Activated CD4-positive, alpha-beta T cell treated with anti-CD3 and anti-CD28 coated beads for 36 hours (primary cell): ENCODE measurements at regions of chr6 and their contacts with region 1.

Region 1: DNA sequence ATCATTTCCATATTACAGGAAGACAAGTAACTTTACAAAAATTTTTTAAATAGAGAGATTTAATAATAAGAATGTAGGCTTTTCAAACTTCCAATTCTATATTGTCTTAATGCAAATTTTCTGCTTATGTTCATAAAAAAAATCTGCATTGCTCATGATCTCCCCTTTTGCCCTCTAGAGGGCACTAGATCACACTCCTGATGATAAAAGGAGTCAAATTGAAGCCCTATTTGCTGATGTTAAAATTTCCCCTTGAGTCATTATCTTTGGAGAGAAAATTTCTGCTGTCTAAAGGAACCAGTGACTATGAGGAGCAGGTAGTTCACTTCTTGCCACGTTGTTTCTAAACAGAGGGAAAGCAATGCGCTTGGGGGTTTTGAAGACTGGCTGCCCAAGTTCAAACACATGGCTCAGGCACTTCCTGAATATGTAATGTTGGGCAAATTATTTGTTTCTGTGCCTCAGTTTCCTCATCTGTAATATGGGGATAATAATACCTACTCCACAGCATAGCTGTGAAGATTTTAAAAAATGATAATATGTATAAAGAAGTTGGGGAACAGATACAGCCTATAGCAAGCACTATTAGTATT is 874.2 kb downstream of the TFAP2A start:
- DNase-seq: peak; percentile 8
- ATAC-seq: peak; percentile 51
- H3K4me3 Mint-ChIP-seq: no peak overlapping the region
- H3K27ac Mint-ChIP-seq: no peak overlapping the region
- H3K4me1 Mint-ChIP-seq: no peaks in the 10 kb centered on the region
- H3K27me3 Mint-ChIP-seq: peaks cover 2% of the 10 kb centered on the region

Region 2: DNA sequence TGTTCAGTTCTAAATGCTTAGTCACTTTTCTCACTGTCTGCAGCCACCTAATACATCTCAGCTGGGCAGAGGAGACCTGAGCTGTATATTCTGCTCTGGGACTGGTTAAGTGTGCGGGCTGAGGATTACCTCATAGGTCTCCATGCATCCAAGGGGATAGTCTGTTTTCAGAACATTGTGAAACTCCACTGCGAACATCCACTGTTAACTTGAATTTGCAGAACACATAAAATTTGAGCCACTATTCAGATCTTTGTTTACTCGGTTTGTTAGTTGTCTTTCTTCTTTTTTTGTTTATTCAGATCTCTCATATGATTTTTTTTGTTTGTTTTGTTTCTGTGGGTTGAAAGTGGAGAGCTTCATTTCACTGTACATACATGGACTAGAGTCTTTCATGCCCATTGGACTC is 72.8 kb before region 1 on chr6:
- CTCF ChIA-PET with region 1: no interaction called
- POLR2A ChIA-PET with region 1: no interaction called
- intact Hi-C with region 1: no loop called
- DNase-seq: no peak
- ATAC-seq: no peak
- H3K4me3 Mint-ChIP-seq: no peak overlapping the region
- H3K27ac Mint-ChIP-seq: no peak overlapping the region
- H3K4me1 Mint-ChIP-seq: no peaks in the 10 kb centered on the region
- H3K27me3 Mint-ChIP-seq: peaks cover 2% of the 10 kb centered on the region

Region 3: GRCh38 chr6:9583753-9584352 is 43.2 kb after region 1 on chr6:
- CTCF ChIA-PET with region 1: no interaction called
- POLR2A ChIA-PET with region 1: no interaction called
- intact Hi-C with region 1: no loop called
- DNase-seq: no peak
- ATAC-seq: no peak
- H3K4me3 Mint-ChIP-seq: no peak overlapping the region
- H3K27ac Mint-ChIP-seq: no peak overlapping the region
- H3K4me1 Mint-ChIP-seq: no peaks in the 10 kb centered on the region
- H3K27me3 Mint-ChIP-seq: peaks cover 7% of the 10 kb centered on the region

Region 4: DNA sequence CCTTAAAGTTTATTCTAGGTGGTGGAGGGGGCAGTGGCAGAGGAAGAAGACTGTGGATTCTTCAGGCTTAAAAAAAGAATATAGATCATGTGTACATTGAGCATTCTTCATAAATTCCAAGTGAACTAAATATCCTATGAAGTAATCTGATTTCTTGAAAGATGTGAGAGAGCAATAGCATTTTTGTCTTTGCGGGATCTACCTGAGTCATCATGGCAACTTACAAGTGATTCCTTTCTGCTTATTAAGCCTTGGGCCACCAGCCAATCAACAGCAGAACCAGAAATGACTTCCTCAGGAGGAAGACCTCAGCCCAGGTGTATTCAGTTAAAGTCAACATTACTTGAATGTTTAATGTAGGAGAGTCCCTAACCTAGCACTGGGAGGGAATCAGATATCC is 117.4 kb after region 1 on chr6:
- CTCF ChIA-PET with region 1: no interaction called
- POLR2A ChIA-PET with region 1: no interaction called
- intact Hi-C with region 1: no loop called
- DNase-seq: no peak
- ATAC-seq: no peak
- H3K4me3 Mint-ChIP-seq: no peak overlapping the region
- H3K27ac Mint-ChIP-seq: no peak overlapping the region
- H3K4me1 Mint-ChIP-seq: no peaks in the 10 kb centered on the region
- H3K27me3 Mint-ChIP-seq: no peaks in the 10 kb centered on the region

Region 5: DNA sequence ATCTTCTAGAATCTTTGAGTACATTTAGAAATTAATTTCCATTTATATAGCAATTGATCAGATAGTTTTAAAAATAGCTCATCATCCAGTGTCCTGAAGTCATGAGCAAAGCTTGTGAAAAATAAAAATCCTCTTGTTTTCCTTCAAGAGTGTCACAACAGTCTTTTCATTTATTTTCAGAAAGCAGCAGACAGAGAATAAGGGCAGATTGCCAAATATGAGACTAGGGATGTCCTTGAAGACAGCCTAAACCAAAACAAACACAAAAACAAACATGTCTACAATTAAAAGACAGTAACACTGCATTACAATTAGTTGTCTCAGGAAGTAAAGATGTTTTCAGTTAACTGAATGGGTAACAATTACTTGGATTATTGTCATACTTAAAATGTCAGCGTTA is 191.4 kb after region 1 on chr6:
- CTCF ChIA-PET with region 1: no interaction called
- POLR2A ChIA-PET with region 1: no interaction called
- intact Hi-C with region 1: no loop called
- DNase-seq: no peak
- ATAC-seq: no peak
- H3K4me3 Mint-ChIP-seq: no peak overlapping the region
- H3K27ac Mint-ChIP-seq: no peak overlapping the region
- H3K4me1 Mint-ChIP-seq: no peaks in the 10 kb centered on the region
- H3K27me3 Mint-ChIP-seq: no peaks in the 10 kb centered on the region

Region 6: GRCh38 chr6:10434692-10435376 is 894.2 kb after region 1 on chr6:
- CTCF ChIA-PET with region 1: interaction called, 3 read pairs
- POLR2A ChIA-PET with region 1: no interaction called
- intact Hi-C with region 1: loop called (anchors 1 to 5 kb)
- DNase-seq: no peak
- ATAC-seq: no peak
- H3K4me3 Mint-ChIP-seq: no peak overlapping the region
- H3K27ac Mint-ChIP-seq: no peak overlapping the region
- H3K4me1 Mint-ChIP-seq: peaks cover 7% of the 10 kb centered on the region
- H3K27me3 Mint-ChIP-seq: peaks cover 24% of the 10 kb centered on the region